Head of caudate nucleus (tissue), 42 donors: ENCODE measurements at regions of chr6 and their contacts with region 1.

Region 1: GRCh38 chr6:36979347-36979742 is 6.7 kb downstream of the MTCH1 start:
- DNase-seq: peak; percentile 66 to 95 (median 84)

Region 2: GRCh38 chr6:36885461-36886401 is 93.6 kb before region 1 on chr6 and contains the start of gene C6orf89:
- intact Hi-C with region 1: loop called (anchors 2 kb)
- DNase-seq: peak; percentile 95 to 100 (median 99)

Region 3: DNA sequence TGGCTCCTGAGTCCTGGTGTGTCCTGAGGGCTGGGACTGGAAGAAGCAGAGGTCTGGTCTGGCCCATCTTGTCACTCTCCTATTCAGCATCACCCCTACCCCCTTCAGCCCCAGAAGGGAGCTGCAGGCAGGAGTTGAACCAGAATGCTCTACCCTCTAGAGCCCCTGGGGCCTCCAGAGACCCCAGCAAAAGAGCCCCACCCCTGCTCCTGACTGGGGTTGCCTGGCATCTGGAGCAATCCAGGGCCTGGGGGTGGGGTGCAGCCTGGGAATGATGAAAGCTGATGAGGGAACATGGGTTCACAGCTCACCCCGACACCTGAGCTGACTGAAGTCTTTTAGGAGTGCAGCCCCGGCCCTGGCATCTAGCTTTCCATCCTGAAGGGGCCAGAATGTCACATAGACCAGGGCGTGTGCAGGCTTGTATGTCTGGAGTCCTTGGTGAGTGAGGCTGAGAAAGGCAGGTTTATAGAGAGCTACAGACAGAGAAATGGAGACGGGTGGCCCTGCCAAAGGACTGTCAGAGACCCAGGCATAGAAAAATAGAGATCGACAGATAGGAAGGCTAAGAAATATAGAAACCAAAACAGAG is 38.4 kb after region 1 on chr6:
- intact Hi-C with region 1: loop called (anchors 2 kb)
- DNase-seq: peak in 12 of 42 donors; percentile 10 to 49 (median 22)